Activated CD4-positive, alpha-beta T cell treated with anti-CD3 and anti-CD28 coated beads, Interleukin-2, amount 10 ng/mL, durations not matched to agents 24 days and 14 days (primary cell): ENCODE measurements at regions of chr3 and their contacts with region 1.

Region 1: DNA sequence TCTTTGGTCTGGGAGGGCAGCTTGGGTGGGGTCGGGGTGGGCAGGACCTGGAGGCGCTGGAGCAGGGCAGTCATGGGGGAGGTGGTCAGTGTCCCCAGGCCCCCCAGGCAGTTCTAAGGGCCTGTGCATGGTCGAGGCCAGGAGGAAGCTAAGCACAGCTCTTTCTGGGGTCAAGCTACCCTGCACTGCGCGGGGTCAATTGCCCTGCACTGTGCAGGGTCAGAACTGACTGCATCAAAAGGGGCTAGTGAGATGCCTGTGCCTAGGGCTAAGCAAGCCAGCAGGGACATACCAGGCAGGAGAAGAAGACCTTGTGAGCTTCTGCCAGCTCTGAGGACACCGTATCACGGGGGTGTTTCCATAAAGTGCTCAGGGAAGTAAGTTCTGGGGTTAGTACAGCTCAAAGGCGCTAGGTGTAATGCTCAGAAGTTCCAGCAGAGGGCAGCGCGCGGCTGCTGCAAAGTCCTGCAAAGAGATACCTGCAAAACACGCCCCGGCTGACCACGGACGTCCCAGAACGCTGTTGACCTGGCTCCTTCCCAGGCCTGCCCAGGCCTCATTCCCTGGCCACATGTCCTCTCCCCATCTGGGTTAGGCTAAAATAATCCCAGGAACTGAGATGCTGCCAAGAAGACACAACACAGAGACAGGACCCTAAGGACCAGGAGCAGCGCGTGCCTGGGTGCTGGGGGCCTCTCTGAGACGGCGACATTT is 18.8 kb upstream of the IQSEC1 start:
- DNase-seq: peak; percentile 94
- H3K4me3 Mint-ChIP-seq: no peak overlapping the region
- H3K27ac Mint-ChIP-seq: no peak overlapping the region
- H3K4me1 Mint-ChIP-seq: peaks cover 3% of the 10 kb centered on the region
- H3K27me3 Mint-ChIP-seq: peaks cover 13% of the 10 kb centered on the region

Region 2: GRCh38 chr3:13272831-13273603 is 181.0 kb after region 1 on chr3:
- intact Hi-C with region 1: no loop called
- DNase-seq: no peak
- H3K4me3 Mint-ChIP-seq: no peak overlapping the region
- H3K27ac Mint-ChIP-seq: no peak overlapping the region
- H3K4me1 Mint-ChIP-seq: peaks cover under 1% of the 10 kb centered on the region
- H3K27me3 Mint-ChIP-seq: peaks cover 21% of the 10 kb centered on the region

Region 3: DNA sequence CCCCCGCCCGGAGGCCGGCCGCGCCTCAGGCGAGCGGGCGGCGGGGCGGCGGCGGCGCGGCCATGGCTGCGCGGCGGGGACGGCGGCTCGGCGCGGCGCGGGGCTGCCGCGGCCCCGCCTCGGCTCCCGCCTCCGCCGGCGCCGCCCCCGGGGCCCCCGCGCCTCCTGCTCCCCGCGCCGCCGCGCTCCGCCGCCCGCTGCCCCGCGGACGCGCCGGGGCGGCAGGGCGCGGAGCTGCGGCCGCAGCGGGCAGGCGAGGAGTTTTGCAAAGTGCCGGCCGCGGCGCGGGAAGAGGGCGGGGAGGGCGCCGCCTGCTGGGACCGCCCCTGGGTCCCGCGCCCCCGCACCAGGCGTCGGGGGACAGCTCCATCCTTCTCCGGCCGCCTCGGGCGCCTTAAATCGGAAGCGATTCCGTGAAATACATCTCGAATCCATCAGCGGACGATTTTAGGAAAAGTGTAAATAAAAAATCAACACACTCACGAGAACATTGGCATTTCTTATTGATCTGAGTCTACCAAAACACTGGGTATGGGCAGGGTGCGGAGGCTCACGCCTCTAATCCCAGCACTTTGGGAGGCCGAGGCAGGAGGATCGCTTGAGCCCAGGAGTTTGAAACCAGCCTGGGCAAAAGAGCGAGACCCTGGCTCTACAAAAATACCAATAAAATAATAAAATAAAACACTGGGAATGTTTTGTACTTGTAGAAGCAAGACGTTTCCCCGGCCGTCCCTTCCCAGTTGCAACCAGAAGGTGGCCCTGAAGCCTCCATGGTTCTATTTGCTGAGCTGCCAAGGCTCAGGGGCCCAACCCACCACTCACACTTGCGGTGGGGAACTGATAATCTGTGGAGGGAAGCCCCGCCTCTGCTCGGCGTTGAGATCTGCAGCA is 191.2 kb after region 1 on chr3:
- intact Hi-C with region 1: loop called (anchors 10 kb)
- DNase-seq: peak; percentile 63
- H3K4me3 Mint-ChIP-seq: peak overlapping the region; percentile 58
- H3K27ac Mint-ChIP-seq: no peak overlapping the region
- H3K4me1 Mint-ChIP-seq: no peaks in the 10 kb centered on the region
- H3K27me3 Mint-ChIP-seq: peaks cover 52% of the 10 kb centered on the region

Region 4: GRCh38 chr3:13648060-13649001 is 556.3 kb after region 1 on chr3:
- intact Hi-C with region 1: loop called (anchors 1 kb)
- DNase-seq: peak; percentile 93
- H3K4me3 Mint-ChIP-seq: no peak overlapping the region
- H3K27ac Mint-ChIP-seq: no peak overlapping the region
- H3K4me1 Mint-ChIP-seq: peaks cover 14% of the 10 kb centered on the region
- H3K27me3 Mint-ChIP-seq: peaks cover 46% of the 10 kb centered on the region